Dendritic cell treated with granulocyte-macrophage colony-stimulating factor and Interleukin-4, amounts not matched to agents 40 ng/mL and 50 ng/mL, for 4 days (primary cell): ENCODE measurements at regions of chr6 and their contacts with region 1.

Region 1: DNA sequence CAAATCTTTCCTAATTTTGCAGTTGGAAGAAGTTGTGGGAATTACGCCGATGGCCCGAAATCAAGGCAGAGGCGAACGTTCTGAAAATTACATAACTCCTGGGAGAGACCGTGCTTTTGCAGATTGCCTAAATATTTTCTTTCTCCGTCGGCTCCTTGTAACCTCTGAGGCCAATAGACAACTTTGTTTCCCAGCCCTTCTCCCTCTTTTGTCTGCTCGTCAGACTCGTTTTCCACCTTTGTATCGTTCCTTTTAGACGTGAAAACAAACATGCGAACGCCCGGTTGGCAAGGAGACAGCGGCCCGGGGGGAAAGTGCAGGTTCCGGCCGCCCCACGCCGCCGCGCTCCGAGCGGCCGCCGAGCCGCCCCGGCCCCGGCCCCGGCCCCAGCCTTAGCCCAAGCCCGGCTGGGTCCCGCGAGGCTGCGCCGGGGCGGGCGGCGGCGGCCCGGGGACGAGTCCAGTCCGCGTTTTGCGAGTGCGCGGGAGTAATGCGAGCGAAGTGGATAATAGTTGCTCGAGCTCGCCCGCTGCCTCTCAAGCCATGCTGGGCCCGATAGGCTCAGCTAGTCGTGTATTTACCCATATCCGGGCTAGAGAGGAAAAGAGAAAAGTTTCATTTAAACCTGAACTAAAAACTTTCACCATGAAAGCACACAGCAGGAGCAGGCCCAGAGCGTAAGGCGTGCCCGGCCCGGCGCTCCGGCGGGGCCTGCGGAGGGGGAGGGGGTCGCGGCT is at the start of gene ARID1B:
- H3K4me3 Mint-ChIP-seq: peak within 1 kb of the TSS; percentile 97
- H3K27ac Mint-ChIP-seq: peak within 1 kb of the TSS; percentile 97
- H3K4me1 Mint-ChIP-seq: peaks cover 26% of the 10 kb centered on the region
- H3K27me3 Mint-ChIP-seq: peaks cover 21% of the 10 kb centered on the region

Region 2: GRCh38 chr6:156564127-156564806 is 212.7 kb before region 1 on chr6:
- intact Hi-C with region 1: loop called (anchors 2 kb)
- H3K4me3 Mint-ChIP-seq: no peak overlapping the region
- H3K27ac Mint-ChIP-seq: no peak overlapping the region
- H3K4me1 Mint-ChIP-seq: no peaks in the 10 kb centered on the region
- H3K27me3 Mint-ChIP-seq: no peaks in the 10 kb centered on the region

Region 3: DNA sequence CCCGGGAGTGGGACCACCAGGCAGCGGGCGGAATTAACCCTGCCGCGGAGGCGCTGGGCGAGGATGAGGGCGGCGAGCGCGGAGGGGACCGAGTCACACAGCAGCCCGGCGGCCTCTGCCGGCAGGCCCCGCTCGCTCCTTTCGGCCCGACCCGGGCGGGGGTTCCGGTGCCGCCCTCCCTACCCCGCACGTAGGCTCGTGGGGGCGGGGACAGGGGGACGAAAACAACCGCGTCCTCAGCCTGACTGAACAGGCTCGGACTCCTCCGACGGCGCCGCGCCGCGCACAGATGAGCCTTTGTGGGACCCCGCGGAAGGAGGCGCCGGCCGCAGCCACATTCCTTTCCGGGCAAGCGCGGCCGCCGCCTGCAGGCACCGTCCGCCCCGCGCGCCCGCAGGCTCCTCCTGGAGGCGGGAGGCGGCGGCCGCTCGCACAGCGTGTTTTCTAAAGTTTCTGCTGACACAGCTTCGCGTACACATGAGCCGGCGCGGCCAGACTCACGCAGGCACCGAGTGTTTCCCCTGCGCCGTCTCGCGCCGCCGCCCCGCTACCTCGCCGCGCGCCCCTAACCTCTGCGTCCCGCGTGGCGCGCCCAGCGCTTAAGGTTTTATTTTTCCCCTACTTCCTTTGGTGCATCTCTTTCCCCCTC is 244.5 kb after region 1 on chr6:
- intact Hi-C with region 1: loop called (anchors 2 kb)
- H3K4me3 Mint-ChIP-seq: peak overlapping the region; percentile 87
- H3K27ac Mint-ChIP-seq: peak overlapping the region; percentile 99
- H3K4me1 Mint-ChIP-seq: peaks cover 28% of the 10 kb centered on the region
- H3K27me3 Mint-ChIP-seq: no peaks in the 10 kb centered on the region